Right cardiac atrium (tissue), 5 donors: ENCODE measurements at regions of chr1 and their contacts with region 1.

Region 1: GRCh38 chr1:15272009-15272788 is 25.2 kb downstream of the FHAD1 start:
- DNase-seq: peak; percentile 33 to 74 (median 69)
- ATAC-seq: peak; percentile 78 to 90
- H3K4me3 ChIP-seq: no peak overlapping the region
- H3K27ac ChIP-seq: no peak overlapping the region
- H3K4me1 ChIP-seq: no peaks in the 10 kb centered on the region
- H3K27me3 ChIP-seq: no peaks in the 10 kb centered on the region

Region 2: DNA sequence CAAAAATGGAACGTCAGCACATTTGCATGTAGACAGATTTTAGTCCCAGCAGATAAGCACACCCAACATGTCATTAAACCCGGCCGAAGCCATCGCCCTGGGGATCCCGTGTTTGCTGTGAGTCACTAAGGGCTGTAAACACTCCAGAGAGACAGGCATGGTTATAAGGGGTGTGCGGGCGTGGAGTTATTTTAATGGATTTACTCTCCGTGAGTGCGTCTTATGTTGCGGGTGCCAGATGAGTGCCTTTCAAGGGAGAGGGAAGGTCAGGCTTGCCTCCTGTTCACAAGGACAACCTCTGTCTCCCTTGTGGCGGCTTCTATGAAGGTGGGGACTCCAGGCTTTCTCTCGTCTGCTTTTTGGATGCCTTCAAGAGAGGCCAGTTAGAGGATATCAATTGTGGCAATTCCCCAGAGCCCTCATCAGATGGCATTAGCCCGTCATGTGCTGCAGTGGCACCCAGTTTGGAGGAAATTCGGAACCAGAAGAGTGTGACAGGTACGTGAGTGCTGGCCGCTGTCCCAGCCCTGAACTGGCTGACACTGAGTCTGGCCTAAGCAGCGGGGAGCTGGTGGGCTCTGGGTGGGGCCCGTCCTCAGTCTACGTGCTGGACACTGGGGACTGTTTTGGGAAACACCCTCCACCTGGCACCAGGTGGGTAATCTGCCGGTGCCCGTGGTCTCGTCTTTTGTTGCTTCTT is 342.5 kb before region 1 on chr1:
- intact Hi-C with region 1: no loop called
- DNase-seq: peak in 2 of 3 donors; percentile 44 to 66
- ATAC-seq: peak; percentile 63 to 78
- H3K4me3 ChIP-seq: peak overlapping the region; percentile 19
- H3K27ac ChIP-seq: no peak overlapping the region
- H3K4me1 ChIP-seq: peaks cover 6% of the 10 kb centered on the region
- H3K27me3 ChIP-seq: no peaks in the 10 kb centered on the region

Region 3: GRCh38 chr1:15128520-15129313 is 143.5 kb before region 1 on chr1:
- intact Hi-C with region 1: loop called in 2 of 4 experiments (anchors 5 kb)
- DNase-seq: peak; percentile 44 to 86 (median 80)
- ATAC-seq: peak; percentile 85 to 92
- H3K4me3 ChIP-seq: no peak overlapping the region
- H3K27ac ChIP-seq: no peak overlapping the region
- H3K4me1 ChIP-seq: no peaks in the 10 kb centered on the region
- H3K27me3 ChIP-seq: no peaks in the 10 kb centered on the region

Region 4: DNA sequence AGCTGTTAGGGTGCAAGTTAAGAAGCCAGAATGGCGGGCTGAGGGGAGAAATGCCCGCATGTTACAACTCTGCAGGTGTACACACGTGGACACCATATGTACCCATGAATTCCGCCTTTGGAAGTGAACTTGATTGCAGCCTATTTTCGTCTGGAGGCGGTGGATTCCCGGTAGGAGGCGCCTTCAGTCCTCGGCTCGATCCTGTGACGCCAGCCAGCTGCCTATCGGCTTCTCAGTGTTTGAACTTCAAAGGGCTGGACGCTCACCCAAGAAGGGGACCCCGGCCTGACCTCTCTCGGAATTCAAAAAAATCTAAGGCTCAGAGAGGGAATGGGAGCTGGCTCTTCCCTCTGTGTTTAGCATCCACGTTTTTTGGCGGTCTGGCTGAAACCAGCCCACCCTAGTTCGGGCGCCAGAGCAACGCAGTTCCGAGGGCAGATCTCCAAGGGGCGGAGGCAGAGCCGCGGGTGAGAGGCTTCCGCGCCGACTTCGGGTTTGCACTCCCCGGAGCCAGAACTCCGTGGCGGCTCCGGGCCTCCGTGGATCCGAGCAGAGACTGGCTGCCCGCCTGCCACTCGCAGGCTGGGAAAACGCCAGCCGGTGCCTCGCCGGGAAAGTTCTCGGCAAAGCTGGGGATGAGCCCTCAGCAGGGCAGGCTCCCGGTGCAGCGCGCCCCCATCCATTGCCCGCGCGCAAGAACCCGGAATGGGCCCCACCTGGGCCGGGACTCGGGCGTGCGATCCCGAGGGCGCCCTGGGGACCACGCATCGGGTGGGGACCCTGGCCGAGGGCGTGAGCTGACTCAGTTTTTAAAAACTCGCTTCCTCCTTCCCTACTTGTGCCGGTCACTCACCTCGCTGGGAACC is 119.6 kb before region 1 on chr1:
- intact Hi-C with region 1: loop called in 3 of 4 experiments (anchors 5 kb)
- DNase-seq: peak; percentile 85 to 91 (median 90)
- ATAC-seq: peak; percentile 71 to 75
- H3K4me3 ChIP-seq: peak overlapping the region; percentile 58
- H3K27ac ChIP-seq: peak overlapping the region; percentile 73
- H3K4me1 ChIP-seq: no peaks in the 10 kb centered on the region
- H3K27me3 ChIP-seq: no peaks in the 10 kb centered on the region

Region 5: DNA sequence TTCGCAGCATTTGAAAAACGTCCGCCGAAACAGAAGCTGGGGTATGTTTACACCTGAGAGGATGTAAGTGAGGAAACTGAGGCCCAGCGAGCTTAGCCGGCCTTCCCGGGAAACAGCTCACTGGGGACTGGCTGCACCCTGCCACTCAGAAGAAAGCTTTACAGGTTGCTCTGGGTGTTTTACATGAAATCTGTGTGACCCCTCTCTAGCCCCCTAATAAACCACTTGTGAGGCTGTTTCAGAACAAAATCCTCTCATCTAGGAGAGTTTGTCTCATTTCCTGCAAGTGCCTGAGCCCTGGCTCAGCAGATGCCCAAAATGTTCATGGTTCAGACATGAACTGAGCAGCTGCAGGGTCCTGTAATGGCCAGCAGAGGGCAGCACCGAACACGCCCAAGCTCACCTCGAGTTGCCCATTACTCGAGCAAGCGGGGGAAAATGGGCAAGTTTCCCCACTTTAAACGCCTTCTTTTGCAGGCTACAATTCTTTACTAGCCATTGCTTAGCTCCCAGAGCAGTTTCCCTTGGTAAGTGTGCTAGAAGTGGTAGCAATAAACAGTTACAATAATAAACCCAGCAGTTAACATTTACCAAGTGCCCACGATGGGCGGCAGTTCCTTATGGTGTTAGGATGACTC is 51.3 kb after region 1 on chr1:
- intact Hi-C with region 1: no loop called
- DNase-seq: peak; percentile 70 to 89 (median 87)
- ATAC-seq: peak; percentile 76 to 87
- H3K4me3 ChIP-seq: no peak overlapping the region
- H3K27ac ChIP-seq: no peak overlapping the region
- H3K4me1 ChIP-seq: no peaks in the 10 kb centered on the region
- H3K27me3 ChIP-seq: no peaks in the 10 kb centered on the region